H1 (cell line): ENCODE measurements at regions of chr4 and their contacts with region 1.

Region 1: DNA sequence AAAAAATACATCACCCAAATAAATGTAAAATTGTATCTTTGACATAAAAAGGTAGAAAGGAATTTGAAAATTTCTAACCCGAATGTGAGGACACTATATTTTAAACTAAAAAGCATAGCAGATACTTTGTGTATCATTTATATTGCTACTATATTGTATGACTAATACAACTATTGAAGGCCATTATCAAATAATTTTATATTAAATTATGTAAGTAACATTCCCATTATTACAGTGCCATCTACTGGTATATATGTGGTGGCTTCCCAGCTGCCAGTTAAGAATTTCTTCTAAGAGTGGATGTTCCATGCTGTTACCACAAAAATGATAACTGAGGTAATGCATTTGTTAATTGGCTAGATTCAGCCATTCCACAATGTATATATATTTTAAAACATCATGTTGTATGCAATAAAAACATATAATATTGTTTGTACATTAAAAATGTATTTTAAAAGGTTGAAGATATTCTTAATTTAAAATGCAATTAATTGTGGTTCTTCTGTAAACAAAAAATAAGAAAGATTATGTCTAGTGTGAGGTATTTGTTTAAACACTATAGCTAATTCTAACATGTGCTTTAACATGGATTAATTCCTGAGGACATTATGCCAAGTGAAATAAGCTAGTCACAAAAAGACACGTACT is 65.3 kb downstream of the EGF start:
- DNase-seq: no peak
- H3K4me3 ChIP-seq: no peak overlapping the region
- H3K27ac ChIP-seq: no peak overlapping the region
- H3K4me1 ChIP-seq: peaks cover 0 to 3% (median under 1%) of the 10 kb centered on the region in 4 experiments; a peak in 3 of 7 replicates
- H3K27me3 ChIP-seq: peaks cover 0 to 1% (median 0%) of the 10 kb centered on the region in 4 experiments; a peak in 1 of 7 replicates
- CTCF ChIP-seq: peak in 2 of 3 experiments; percentile 8 to 36; a peak in 2 of 4 replicates
- EP300 ChIP-seq: no peak
- POLR2A ChIP-seq: no peak
- RAD21 ChIP-seq: peak; percentile 57 to 65

Region 2: GRCh38 chr4:109826719-109827118 is 151.3 kb before region 1 on chr4:
- CTCF ChIA-PET with region 1: interaction called, 11 read pairs
- POLR2A ChIA-PET with region 1: no interaction called
- DNase-seq: no peak
- H3K4me3 ChIP-seq: no peak overlapping the region
- H3K27ac ChIP-seq: no peak overlapping the region
- H3K4me1 ChIP-seq: no peaks in the 10 kb centered on the region
- H3K27me3 ChIP-seq: no peaks in the 10 kb centered on the region
- CTCF ChIP-seq: peak in 1 of 3 experiments; percentile 20; a peak in 2 of 4 replicates
- EP300 ChIP-seq: no peak
- POLR2A ChIP-seq: no peak
- RAD21 ChIP-seq: peak in 1 of 2 experiments; percentile 35

Region 3: GRCh38 chr4:109990261-109991257 is 12.6 kb after region 1 on chr4:
- CTCF ChIA-PET with region 1: interaction called, 15 read pairs
- POLR2A ChIA-PET with region 1: interaction called, 3 read pairs
- DNase-seq: no peak
- H3K4me3 ChIP-seq: no peak overlapping the region
- H3K27ac ChIP-seq: no peak overlapping the region
- H3K4me1 ChIP-seq: no peaks in the 10 kb centered on the region
- H3K27me3 ChIP-seq: no peaks in the 10 kb centered on the region
- CTCF ChIP-seq: no peak
- EP300 ChIP-seq: no peak
- POLR2A ChIP-seq: no peak
- RAD21 ChIP-seq: no peak

Region 4: DNA sequence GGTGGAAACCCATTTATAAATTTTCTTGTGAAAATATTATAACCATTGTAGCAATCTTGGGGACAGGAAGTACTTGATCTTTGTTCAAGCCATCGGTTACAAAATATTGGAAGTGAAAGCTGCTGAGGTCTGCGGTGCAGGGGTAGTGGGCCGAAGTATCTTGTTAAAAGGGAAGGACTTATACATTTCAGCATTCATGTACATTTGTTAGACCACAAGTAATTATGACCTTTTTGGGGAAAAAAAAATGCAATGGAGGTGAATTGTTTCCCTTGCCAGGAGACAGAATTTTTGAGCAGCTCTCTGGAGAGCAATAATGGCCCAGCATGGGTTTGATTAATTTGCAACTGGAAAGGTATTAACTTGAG is 56.0 kb after region 1 on chr4:
- CTCF ChIA-PET with region 1: no interaction called
- POLR2A ChIA-PET with region 1: no interaction called
- DNase-seq: no peak
- H3K4me3 ChIP-seq: no peak overlapping the region
- H3K27ac ChIP-seq: no peak overlapping the region
- H3K4me1 ChIP-seq: no peaks in the 10 kb centered on the region
- H3K27me3 ChIP-seq: no peaks in the 10 kb centered on the region
- CTCF ChIP-seq: no peak
- EP300 ChIP-seq: no peak
- POLR2A ChIP-seq: no peak
- RAD21 ChIP-seq: no peak